ENCODE measurements at regions of chr5 and their contacts with region 1.

Region 1: GRCh38 chr5:148179234-148179824 is 11.0 kb downstream of the SPINK14 start:
- DNase-seq: peak; percentile 73
- H3K4me3 Mint-ChIP-seq: no peak overlapping the region
- H3K27ac Mint-ChIP-seq: no peak overlapping the region
- H3K4me1 Mint-ChIP-seq: peaks cover 3% of the 10 kb centered on the region
- H3K27me3 Mint-ChIP-seq: peaks cover 15% of the 10 kb centered on the region

Region 2: DNA sequence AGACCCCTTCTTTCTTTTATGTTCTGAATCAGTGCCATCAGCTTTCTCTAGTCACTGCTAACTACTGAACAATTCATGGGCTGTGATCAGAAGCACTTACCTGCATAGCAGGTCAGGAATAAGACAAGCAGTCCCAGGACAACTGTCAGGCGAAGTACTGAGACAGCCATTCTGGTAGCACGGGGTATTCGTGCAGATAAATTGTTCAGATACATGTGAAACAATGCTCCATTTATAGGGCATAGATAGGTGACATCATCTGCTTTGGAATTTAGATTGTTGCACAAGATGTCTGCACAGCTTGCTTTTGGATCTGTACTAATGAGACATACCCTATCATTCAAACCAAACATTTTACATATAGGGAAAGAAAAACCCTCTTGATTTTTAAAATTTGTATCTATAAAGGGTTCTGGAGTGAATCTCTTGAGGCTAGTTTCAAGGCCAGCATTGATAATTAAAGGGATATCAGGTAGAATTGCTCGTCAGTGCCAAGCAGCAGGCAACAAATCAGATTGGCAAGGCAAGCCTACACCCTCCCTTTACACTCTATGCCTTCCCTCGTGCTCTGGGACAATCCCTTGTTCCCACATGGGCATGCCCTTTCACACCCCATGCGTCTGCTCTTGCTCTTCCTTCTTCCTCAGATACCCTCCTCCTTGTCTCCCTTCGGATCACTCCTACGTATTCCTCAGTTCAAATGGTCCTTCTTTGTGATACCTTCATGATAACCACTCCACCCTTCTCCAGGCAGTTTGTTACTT is 272.8 kb before region 1 on chr5 and contains the start of gene C5orf46:
- intact Hi-C with region 1: no loop called
- DNase-seq: no peak
- H3K4me3 Mint-ChIP-seq: no peak within 1 kb of the TSS
- H3K27ac Mint-ChIP-seq: no peak within 1 kb of the TSS
- H3K4me1 Mint-ChIP-seq: no peaks in the 10 kb centered on the region
- H3K27me3 Mint-ChIP-seq: no peaks in the 10 kb centered on the region
- total RNA-seq, gene C5orf46: not detected in 2 replicates

Region 3: GRCh38 chr5:148191010-148191409 is 11.7 kb after region 1 on chr5:
- intact Hi-C with region 1: no loop called
- DNase-seq: no peak
- H3K4me3 Mint-ChIP-seq: no peak overlapping the region
- H3K27ac Mint-ChIP-seq: no peak overlapping the region
- H3K4me1 Mint-ChIP-seq: peaks cover 6% of the 10 kb centered on the region
- H3K27me3 Mint-ChIP-seq: peaks cover 8% of the 10 kb centered on the region

Region 4: GRCh38 chr5:148202531-148203203 is 23.3 kb after region 1 on chr5 and contains the start of gene SPINK6:
- intact Hi-C with region 1: no loop called
- DNase-seq: no peak
- H3K4me3 Mint-ChIP-seq: no peak within 1 kb of the TSS
- H3K27ac Mint-ChIP-seq: no peak within 1 kb of the TSS
- H3K4me1 Mint-ChIP-seq: no peaks in the 10 kb centered on the region
- H3K27me3 Mint-ChIP-seq: peaks cover 9% of the 10 kb centered on the region
- total RNA-seq, gene SPINK6: not detected in 2 replicates

Region 5: DNA sequence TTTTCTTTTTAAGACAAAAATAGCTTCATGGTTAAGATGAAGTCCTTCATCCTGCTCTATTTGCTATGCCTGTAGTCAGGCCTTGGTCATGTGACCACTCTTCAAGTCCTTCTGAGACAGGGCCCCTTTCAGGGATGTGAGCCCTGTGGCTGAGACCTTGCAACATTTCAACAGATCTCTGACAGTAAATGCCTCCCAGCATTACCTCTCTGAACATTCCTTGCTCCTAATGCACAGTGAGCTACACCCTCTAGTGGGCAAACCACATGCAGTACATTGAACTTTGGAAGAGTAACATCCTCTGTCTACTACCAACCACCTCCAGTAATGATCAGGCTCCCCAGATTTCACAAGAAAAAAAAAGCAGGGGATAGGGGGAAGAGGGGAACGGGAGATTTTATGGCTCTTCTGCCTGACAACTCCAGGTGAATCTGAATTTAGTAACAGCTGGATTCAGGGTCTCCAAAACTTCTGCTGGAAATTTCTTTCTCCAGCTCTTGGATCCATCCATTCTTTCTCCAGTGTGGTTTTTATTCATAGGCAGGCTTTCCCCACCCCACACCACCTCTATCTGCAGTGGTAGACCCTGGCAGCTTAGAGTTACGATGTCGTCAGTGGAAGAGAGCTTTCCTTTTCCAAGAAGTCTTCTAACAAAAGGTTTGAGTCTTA is 195.5 kb after region 1 on chr5:
- intact Hi-C with region 1: loop called (anchors 1 kb)
- DNase-seq: peak; percentile 75
- H3K4me3 Mint-ChIP-seq: no peak overlapping the region
- H3K27ac Mint-ChIP-seq: no peak overlapping the region
- H3K4me1 Mint-ChIP-seq: peaks cover 6% of the 10 kb centered on the region
- H3K27me3 Mint-ChIP-seq: no peaks in the 10 kb centered on the region

Region 6: DNA sequence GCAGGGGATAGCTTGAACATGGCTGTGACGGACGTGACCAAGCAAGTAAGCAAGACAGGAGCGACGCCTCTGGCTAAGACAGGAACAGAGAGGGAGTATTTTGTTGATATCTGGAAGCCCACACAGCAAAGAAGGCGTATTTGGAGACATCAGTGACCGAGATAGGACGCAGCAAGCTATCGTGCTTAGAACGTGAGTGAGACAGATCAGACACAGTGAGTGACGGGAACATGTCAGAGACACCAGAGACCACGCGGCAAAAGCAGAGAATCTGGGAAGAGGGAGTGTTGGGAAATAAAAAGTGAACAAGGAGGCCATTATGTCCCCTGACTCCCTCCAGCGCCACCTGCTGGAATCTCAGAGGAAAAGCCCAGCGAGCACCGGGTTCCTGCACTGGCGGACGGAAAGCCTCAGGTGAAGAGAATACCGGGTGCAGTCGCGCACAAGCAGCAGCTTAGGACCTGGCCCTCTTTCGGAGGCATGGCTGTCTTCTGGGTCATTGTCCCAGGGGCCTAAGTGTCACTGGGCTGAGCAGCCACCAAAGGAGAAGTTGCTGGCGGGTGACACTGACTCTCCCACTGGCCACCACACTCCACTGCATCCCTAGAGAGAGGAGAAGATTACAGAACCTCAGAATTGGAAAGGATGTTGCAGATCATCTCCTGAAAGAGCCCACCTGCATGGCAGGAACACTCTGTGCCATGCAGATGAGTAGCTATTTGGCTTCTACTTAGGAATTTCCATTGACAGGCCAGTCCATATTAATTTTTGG is 303.5 kb after region 1 on chr5:
- intact Hi-C with region 1: loop called (anchors 2 kb)
- DNase-seq: peak; percentile 88
- H3K4me3 Mint-ChIP-seq: no peak overlapping the region
- H3K27ac Mint-ChIP-seq: no peak overlapping the region
- H3K4me1 Mint-ChIP-seq: peaks cover 5% of the 10 kb centered on the region
- H3K27me3 Mint-ChIP-seq: peaks cover 32% of the 10 kb centered on the region

Region 7: DNA sequence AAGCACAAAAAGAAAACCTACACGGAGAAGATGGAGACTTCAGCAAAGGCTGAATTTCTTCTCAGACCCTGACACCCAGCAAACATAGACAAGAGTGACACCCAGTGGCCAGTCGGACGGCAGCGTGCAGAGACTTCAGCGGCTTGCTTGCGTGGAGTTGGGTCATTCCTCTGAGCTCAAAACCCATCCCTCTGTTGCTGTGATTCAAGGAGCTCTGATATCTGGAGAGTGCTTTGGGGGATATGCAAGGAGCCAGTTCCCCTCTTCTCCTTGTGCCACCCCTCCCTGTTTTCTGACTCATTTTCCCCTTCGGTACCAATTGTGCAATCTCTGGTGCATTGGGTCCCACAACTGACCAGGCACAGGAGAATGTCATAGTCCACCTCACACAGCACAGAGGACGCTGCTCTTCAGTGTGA is 856.1 kb after region 1 on chr5:
- intact Hi-C with region 1: loop called (anchors 5 kb)
- DNase-seq: peak; percentile 89
- H3K4me3 Mint-ChIP-seq: no peak overlapping the region
- H3K27ac Mint-ChIP-seq: no peak overlapping the region
- H3K4me1 Mint-ChIP-seq: peaks cover 28% of the 10 kb centered on the region
- H3K27me3 Mint-ChIP-seq: peaks cover 3% of the 10 kb centered on the region

Measured in activated CD4-positive, alpha-beta T cell treated with anti-CD3 and anti-CD28 coated beads, Interleukin-2, amount 10 ng/mL, durations not matched to agents 24 days and 14 days (primary cell).